ENCODE measurements at regions of chr2 and their contacts with region 1.

Region 1: DNA sequence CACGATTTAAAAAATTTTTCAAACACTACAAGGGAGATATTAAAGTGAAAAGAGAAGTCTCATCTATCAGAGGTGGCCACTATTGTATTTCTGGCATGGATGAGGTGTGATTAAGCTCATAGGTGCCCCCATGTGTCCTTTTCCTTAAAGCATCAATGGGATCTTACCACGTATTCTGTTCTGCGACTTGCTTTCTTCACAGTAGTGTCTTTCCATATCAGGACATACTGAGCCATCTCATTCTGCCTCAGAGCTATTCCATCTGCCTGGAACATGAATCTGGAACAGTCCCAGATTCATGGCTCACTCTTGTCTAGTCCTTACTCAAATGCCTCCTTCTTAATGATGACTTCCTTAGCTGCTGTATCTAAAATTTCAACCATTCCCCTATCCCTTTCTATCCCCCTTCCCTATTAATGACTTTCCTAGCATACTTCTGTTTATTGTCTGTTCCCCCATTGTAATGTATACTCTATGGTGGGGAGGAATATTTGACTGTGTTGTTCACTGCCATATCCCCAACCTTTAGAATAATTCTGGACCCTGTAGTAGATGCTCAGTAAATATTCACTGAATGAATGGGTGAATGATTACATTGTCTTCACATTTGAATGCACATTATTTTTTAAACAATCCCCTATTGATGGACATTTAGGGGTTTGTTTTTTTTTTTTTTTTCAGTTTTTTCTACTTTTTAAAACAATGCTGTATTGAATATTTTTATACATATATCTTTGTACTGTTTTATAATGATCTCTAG is 11.1 kb downstream of the STAMBP start:
- DNase-seq: no peak
- H3K4me3 ChIP-seq: peak overlapping the region in 1 of 4 donors; percentile 23
- H3K27ac ChIP-seq: peak overlapping the region; percentile 82 to 96 (median 90)
- H3K4me1 ChIP-seq: peaks cover 0 to 68% (median 57%) of the 10 kb centered on the region in 4 donors
- H3K27me3 ChIP-seq: no peaks in the 10 kb centered on the region
- CTCF ChIP-seq: no peak
- EP300 ChIP-seq: peak in 1 of 4 donors; percentile 12
- POLR2A ChIP-seq: no peak

Region 2: DNA sequence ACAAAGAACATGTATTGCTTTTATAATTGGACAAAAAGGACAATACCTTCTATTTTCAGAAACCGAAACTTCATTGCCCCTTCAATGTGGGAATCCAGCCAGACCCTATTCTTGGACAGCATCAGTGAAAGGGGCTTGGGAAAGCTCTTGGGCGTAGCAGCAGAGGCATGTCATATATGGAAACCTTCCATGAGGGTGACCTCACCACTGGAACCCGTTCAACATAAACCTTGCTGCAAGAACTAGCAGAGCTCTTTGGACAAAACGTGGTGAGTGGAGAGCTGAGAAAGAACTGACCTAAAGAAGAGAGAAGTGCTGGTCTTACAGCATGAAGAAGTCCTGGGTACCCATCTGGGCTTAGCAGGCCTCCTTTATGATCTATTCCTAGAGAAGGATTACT is 30.3 kb after region 1 on chr2:
- intact Hi-C with region 1: loop called (anchors 5 kb)
- DNase-seq: peak; percentile 92
- H3K4me3 ChIP-seq: no peak overlapping the region
- H3K27ac ChIP-seq: peak overlapping the region; percentile 85 to 94 (median 86)
- H3K4me1 ChIP-seq: peaks cover 0 to 44% (median 39%) of the 10 kb centered on the region in 4 donors
- H3K27me3 ChIP-seq: no peaks in the 10 kb centered on the region
- CTCF ChIP-seq: no peak
- EP300 ChIP-seq: peak in 1 of 4 donors; percentile 18
- POLR2A ChIP-seq: no peak

Region 3: GRCh38 chr2:73892631-73893329 is 52.9 kb after region 1 on chr2 and contains the start of gene ACTG2:
- intact Hi-C with region 1: loop called (anchors 2 kb)
- DNase-seq: peak; percentile 94
- H3K4me3 ChIP-seq: peak within 1 kb of the TSS; percentile 58 to 79 (median 75)
- H3K27ac ChIP-seq: peak within 1 kb of the TSS; percentile 90 to 99 (median 94)
- H3K4me1 ChIP-seq: peaks cover 0 to 47% (median 41%) of the 10 kb centered on the region in 4 donors
- H3K27me3 ChIP-seq: no peaks in the 10 kb centered on the region
- CTCF ChIP-seq: no peak
- EP300 ChIP-seq: peak; percentile 35 to 90 (median 70)
- POLR2A ChIP-seq: peak; percentile 87 to 97
- total RNA-seq, gene ACTG2: 3,612 to 10,290 (median 5,643) TPM

Region 4: GRCh38 chr2:74226648-74227213 is 386.9 kb after region 1 on chr2:
- intact Hi-C with region 1: no loop called
- DNase-seq: no peak
- H3K4me3 ChIP-seq: no peak overlapping the region
- H3K27ac ChIP-seq: no peak overlapping the region
- H3K4me1 ChIP-seq: no peaks in the 10 kb centered on the region
- H3K27me3 ChIP-seq: no peaks in the 10 kb centered on the region
- CTCF ChIP-seq: no peak
- EP300 ChIP-seq: no peak
- POLR2A ChIP-seq: no peak

Measured in sigmoid colon (tissue), 7 donors.